T-cell (primary cell): ENCODE measurements at regions of chr6 and their contacts with region 1.

Region 1: GRCh38 chr6:47007657-47008389 is 34.3 kb downstream of the ADGRF1 start:
- DNase-seq: no peak
- ATAC-seq: no peak
- H3K4me3 ChIP-seq: no peak overlapping the region
- H3K4me3 Mint-ChIP-seq: no peak overlapping the region
- H3K27ac ChIP-seq: no peak overlapping the region
- H3K27ac Mint-ChIP-seq: no peak overlapping the region
- H3K4me1 ChIP-seq: no peaks in the 10 kb centered on the region
- H3K4me1 Mint-ChIP-seq: no peaks in the 10 kb centered on the region
- H3K27me3 ChIP-seq: no peaks in the 10 kb centered on the region
- H3K27me3 Mint-ChIP-seq: peaks cover 0 to 7% of the 10 kb centered on the region in 2 donors

Region 2: GRCh38 chr6:47111685-47112084 is 103.9 kb after region 1 on chr6:
- CTCF ChIA-PET with region 1: interaction called in 1 of 2 experiments, 11 read pairs
- POLR2A ChIA-PET with region 1: no interaction called
- DNase-seq: no peak
- ATAC-seq: no peak
- H3K4me3 ChIP-seq: no peak overlapping the region
- H3K4me3 Mint-ChIP-seq: no peak overlapping the region
- H3K27ac ChIP-seq: no peak overlapping the region
- H3K27ac Mint-ChIP-seq: no peak overlapping the region
- H3K4me1 ChIP-seq: no peaks in the 10 kb centered on the region
- H3K4me1 Mint-ChIP-seq: no peaks in the 10 kb centered on the region
- H3K27me3 ChIP-seq: no peaks in the 10 kb centered on the region
- H3K27me3 Mint-ChIP-seq: peaks cover 4 to 10% of the 10 kb centered on the region in 2 donors

Region 3: DNA sequence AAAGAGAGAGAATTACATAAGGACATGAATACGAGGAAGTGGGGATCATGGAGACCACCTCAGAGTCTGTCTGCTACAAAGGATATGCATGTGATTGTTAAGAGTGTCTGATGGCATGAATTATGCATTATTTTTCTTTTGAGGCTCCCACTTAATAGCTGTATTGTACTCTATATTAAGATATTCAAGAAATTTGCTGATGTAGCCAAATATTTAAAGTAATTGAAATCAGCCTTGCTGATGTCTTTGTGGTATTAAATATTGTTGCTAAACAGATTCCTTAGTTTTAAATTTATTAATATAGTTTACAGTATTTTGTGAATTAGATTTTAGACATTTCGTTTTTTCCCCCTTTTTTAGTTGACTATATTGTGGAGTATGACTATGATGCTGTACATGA is 495.1 kb after region 1 on chr6:
- CTCF ChIA-PET with region 1: no interaction called
- POLR2A ChIA-PET with region 1: no interaction called
- DNase-seq: no peak
- ATAC-seq: no peak
- H3K4me3 ChIP-seq: no peak overlapping the region
- H3K4me3 Mint-ChIP-seq: no peak overlapping the region
- H3K27ac ChIP-seq: no peak overlapping the region
- H3K27ac Mint-ChIP-seq: peak overlapping the region in 1 of 2 donors; percentile 19
- H3K4me1 ChIP-seq: peaks cover 4 to 7% of the 10 kb centered on the region in 2 experiments
- H3K4me1 Mint-ChIP-seq: peaks cover 56 to 62% (median 60%) of the 10 kb centered on the region in 3 donors
- H3K27me3 ChIP-seq: no peaks in the 10 kb centered on the region
- H3K27me3 Mint-ChIP-seq: no peaks in the 10 kb centered on the region